ENCODE measurements at regions of chr1 and their contacts with region 1.

Region 1: GRCh38 chr1:172338295-172338735 is 82.2 kb upstream of the C1orf105 start:
- DNase-seq: peak; percentile 81
- H3K4me3 Mint-ChIP-seq: no peak overlapping the region
- H3K27ac Mint-ChIP-seq: peak overlapping the region; percentile 69
- H3K4me1 Mint-ChIP-seq: peaks cover 41% of the 10 kb centered on the region
- H3K27me3 Mint-ChIP-seq: no peaks in the 10 kb centered on the region

Region 2: GRCh38 chr1:172135076-172135672 is 203.1 kb before region 1 on chr1:
- CTCF ChIA-PET with region 1: no interaction called
- POLR2A ChIA-PET with region 1: no interaction called
- intact Hi-C with region 1: loop called (anchors 1 kb)
- DNase-seq: no peak
- H3K4me3 Mint-ChIP-seq: no peak overlapping the region
- H3K27ac Mint-ChIP-seq: peak overlapping the region; percentile 29
- H3K4me1 Mint-ChIP-seq: peaks cover 18% of the 10 kb centered on the region
- H3K27me3 Mint-ChIP-seq: no peaks in the 10 kb centered on the region

Region 3: DNA sequence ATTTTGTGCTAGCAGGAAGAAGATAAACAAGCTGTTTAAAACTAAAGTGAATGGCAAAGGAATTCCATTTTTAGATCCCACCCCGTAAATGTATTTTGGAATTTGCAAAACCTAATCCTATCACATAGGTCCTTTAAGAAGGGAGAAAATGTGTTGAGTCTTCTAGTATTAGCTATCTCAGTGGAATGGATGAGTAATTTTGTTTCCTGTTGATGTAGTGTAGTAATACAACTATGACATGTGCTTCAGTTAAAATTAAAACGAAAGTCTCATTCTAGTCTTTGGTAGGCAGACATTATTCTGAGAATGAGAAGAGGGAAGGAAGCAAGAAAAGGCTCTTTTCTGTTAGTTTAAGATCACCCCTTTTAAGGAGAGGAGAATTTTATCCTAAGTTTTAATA is 183.8 kb before region 1 on chr1:
- CTCF ChIA-PET with region 1: interaction called, 5 read pairs
- POLR2A ChIA-PET with region 1: no interaction called
- intact Hi-C with region 1: loop called (anchors 1 kb)
- DNase-seq: no peak
- H3K4me3 Mint-ChIP-seq: no peak overlapping the region
- H3K27ac Mint-ChIP-seq: peak overlapping the region; percentile 86
- H3K4me1 Mint-ChIP-seq: peaks cover 14% of the 10 kb centered on the region
- H3K27me3 Mint-ChIP-seq: no peaks in the 10 kb centered on the region

Region 4: GRCh38 chr1:172269644-172270043 is 68.7 kb before region 1 on chr1:
- CTCF ChIA-PET with region 1: interaction called, 5 read pairs
- POLR2A ChIA-PET with region 1: interaction called, 10 read pairs
- intact Hi-C with region 1: loop called (anchors 1 kb)
- DNase-seq: peak; percentile 41
- H3K4me3 Mint-ChIP-seq: no peak overlapping the region
- H3K27ac Mint-ChIP-seq: peak overlapping the region; percentile 49
- H3K4me1 Mint-ChIP-seq: peaks cover 48% of the 10 kb centered on the region
- H3K27me3 Mint-ChIP-seq: no peaks in the 10 kb centered on the region

Region 5: GRCh38 chr1:172298146-172298545 is 40.2 kb before region 1 on chr1:
- CTCF ChIA-PET with region 1: no interaction called
- POLR2A ChIA-PET with region 1: no interaction called
- intact Hi-C with region 1: no loop called
- DNase-seq: no peak
- H3K4me3 Mint-ChIP-seq: no peak overlapping the region
- H3K27ac Mint-ChIP-seq: no peak overlapping the region
- H3K4me1 Mint-ChIP-seq: no peaks in the 10 kb centered on the region
- H3K27me3 Mint-ChIP-seq: no peaks in the 10 kb centered on the region

Region 6: DNA sequence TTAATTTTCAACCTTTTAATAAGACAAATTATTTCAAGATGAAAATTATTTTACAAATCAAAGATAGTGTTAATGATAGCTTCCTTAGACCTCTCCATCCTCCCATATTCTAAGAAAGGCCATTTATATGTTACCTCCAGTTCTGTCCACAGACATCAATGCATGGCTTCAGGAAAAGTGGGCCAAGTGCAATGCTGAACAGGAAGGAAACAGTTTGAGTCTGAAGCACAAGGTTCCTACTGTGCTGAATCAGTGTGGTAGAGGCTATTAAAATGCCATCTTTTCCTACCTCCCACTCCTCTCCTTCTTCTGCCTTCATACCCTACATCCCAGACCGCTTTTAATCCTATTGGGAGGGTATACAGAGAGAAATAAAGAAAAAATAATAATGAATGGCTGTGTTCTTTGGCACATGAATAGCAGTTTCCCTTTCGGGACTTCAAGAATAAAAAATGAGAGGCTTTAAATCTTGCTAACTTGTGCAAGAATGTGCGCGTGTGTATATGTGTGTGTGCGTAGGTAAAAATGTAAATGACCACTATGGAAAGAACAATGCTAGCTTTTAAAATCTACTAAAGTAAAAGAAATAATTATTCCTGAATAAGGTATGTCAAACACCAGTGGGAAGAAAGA is 19.6 kb after region 1 on chr1:
- CTCF ChIA-PET with region 1: interaction called, 22 read pairs
- POLR2A ChIA-PET with region 1: interaction called, 31 read pairs
- intact Hi-C with region 1: loop called (anchors 1 kb)
- DNase-seq: no peak
- H3K4me3 Mint-ChIP-seq: peak overlapping the region; percentile 11
- H3K27ac Mint-ChIP-seq: peak overlapping the region; percentile 85
- H3K4me1 Mint-ChIP-seq: peaks cover 66% of the 10 kb centered on the region
- H3K27me3 Mint-ChIP-seq: no peaks in the 10 kb centered on the region

Region 7: GRCh38 chr1:172380441-172381244 is 42.3 kb after region 1 on chr1:
- CTCF ChIA-PET with region 1: no interaction called
- POLR2A ChIA-PET with region 1: interaction called, 3 read pairs
- intact Hi-C with region 1: loop called (anchors 1 kb)
- DNase-seq: peak; percentile 45
- H3K4me3 Mint-ChIP-seq: peak overlapping the region; percentile 48
- H3K27ac Mint-ChIP-seq: peak overlapping the region; percentile 83
- H3K4me1 Mint-ChIP-seq: peaks cover 28% of the 10 kb centered on the region
- H3K27me3 Mint-ChIP-seq: no peaks in the 10 kb centered on the region

Region 8: GRCh38 chr1:172449585-172450534 is 111.5 kb after region 1 on chr1:
- CTCF ChIA-PET with region 1: interaction called, 3 read pairs
- POLR2A ChIA-PET with region 1: no interaction called
- intact Hi-C with region 1: loop called (anchors 2 kb)
- DNase-seq: peak; percentile 47
- H3K4me3 Mint-ChIP-seq: peak overlapping the region; percentile 36
- H3K27ac Mint-ChIP-seq: no peak overlapping the region
- H3K4me1 Mint-ChIP-seq: peaks cover 31% of the 10 kb centered on the region
- H3K27me3 Mint-ChIP-seq: no peaks in the 10 kb centered on the region

Measured in activated CD4-positive, alpha-beta memory T cell treated with anti-CD3 and anti-CD28 coated beads for 36 hours (primary cell).